ENCODE measurements at regions of chr14 and their contacts with region 1.

Region 1: DNA sequence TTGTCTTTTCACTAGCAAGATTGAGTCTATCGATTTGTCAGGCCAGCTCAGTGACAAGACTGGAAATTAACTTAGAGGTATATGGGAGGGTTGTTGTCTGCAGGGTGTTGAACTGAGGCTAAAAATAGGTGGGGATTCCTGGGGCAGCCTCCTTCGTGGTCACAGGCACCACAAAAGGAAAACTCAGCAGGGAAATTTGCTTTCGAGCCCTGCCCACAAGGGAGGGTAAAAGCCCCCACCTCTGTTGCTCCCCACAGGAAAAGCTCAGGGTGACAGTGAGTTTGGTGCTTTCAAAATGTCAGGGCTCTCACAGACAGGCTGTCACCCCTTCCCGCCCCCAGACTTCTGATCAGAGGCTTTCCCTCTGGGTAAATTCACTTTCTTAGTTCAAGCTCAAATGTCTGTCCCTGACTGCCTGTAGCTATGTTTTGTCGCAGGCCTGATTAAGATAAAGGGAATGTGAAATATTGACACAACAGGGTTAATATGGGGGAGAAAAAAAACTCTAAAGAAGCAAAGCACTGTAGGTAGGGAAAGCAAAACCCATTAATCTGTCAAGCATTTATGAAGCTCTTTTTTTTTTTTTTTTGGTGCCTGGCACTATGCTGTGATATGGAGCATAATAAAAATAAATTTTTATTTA is 11.7 kb upstream of the NFKBIA start:
- DNase-seq: peak; percentile 80
- ATAC-seq: peak; percentile 45
- H3K4me3 Mint-ChIP-seq: peak overlapping the region; percentile 56
- H3K27ac Mint-ChIP-seq: peak overlapping the region; percentile 86
- H3K4me1 Mint-ChIP-seq: peaks cover 48% of the 10 kb centered on the region
- H3K27me3 Mint-ChIP-seq: peaks cover 9% of the 10 kb centered on the region

Region 2: GRCh38 chr14:35215110-35215876 is 200.9 kb before region 1 on chr14:
- CTCF ChIA-PET with region 1: interaction called, 13 read pairs
- DNase-seq: no peak
- ATAC-seq: peak; percentile 55
- H3K4me3 Mint-ChIP-seq: no peak overlapping the region
- H3K27ac Mint-ChIP-seq: no peak overlapping the region
- H3K4me1 Mint-ChIP-seq: peaks cover 21% of the 10 kb centered on the region
- H3K27me3 Mint-ChIP-seq: no peaks in the 10 kb centered on the region

Region 3: GRCh38 chr14:35229495-35230089 is 186.6 kb before region 1 on chr14:
- CTCF ChIA-PET with region 1: interaction called, 22 read pairs
- DNase-seq: no peak
- ATAC-seq: peak; percentile 57
- H3K4me3 Mint-ChIP-seq: no peak overlapping the region
- H3K27ac Mint-ChIP-seq: peak overlapping the region; percentile 39
- H3K4me1 Mint-ChIP-seq: peaks cover 20% of the 10 kb centered on the region
- H3K27me3 Mint-ChIP-seq: no peaks in the 10 kb centered on the region

Region 4: GRCh38 chr14:35687335-35687939 is 271.2 kb after region 1 on chr14:
- CTCF ChIA-PET with region 1: interaction called, 11 read pairs
- DNase-seq: peak; percentile 58
- ATAC-seq: no peak
- H3K4me3 Mint-ChIP-seq: no peak overlapping the region
- H3K27ac Mint-ChIP-seq: no peak overlapping the region
- H3K4me1 Mint-ChIP-seq: peaks cover 22% of the 10 kb centered on the region
- H3K27me3 Mint-ChIP-seq: no peaks in the 10 kb centered on the region

Measured in activated CD8-positive, alpha-beta memory T cell treated with anti-CD3 and anti-CD28 coated beads, Interleukin-2, amount 10 ng/mL, durations not matched to agents 7 days and 5 days (primary cell).